Right lobe of liver (tissue), 6 donors: ENCODE measurements at regions of chrX and their contacts with region 1.

Region 1: DNA sequence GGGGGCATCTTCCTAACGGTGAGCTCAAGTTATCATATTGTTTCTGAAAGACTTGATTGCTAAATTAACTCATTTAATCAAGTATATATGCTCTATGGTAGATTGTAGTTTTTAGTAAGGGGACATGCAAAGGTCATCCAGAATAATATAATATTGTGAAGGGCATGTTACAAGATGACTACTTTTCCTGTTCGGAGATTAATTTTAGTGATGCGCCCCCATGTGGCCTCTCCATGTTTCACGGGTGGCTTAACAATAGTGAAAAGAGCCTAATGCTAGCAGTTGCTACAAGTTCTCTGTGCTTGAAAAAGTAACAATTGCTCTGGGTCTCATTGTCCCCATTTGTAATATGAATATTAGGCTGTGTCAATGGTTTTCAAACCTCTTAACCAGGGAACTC is 12.2 kb downstream of the SMPX start:
- DNase-seq: peak in 2 of 3 donors; percentile 28 to 42
- ATAC-seq: peak; percentile 27 to 48 (median 42)
- H3K4me3 ChIP-seq: no peak overlapping the region
- H3K27ac ChIP-seq: no peak overlapping the region
- H3K4me1 ChIP-seq: peaks cover 0 to 5% (median 2%) of the 10 kb centered on the region in 4 donors
- H3K27me3 ChIP-seq: no peaks in the 10 kb centered on the region
- CTCF ChIP-seq: peak; percentile 52 to 73 (median 68)
- POLR2A ChIP-seq: no peak

Region 2: GRCh38 chrX:20527558-20528011 is 1218.2 kb before region 1 on chrX:
- intact Hi-C with region 1: loop called in 1 of 2 experiments (anchors 10 kb)
- DNase-seq: peak in 1 of 3 donors; percentile 18
- ATAC-seq: peak; percentile 77 to 88 (median 85)
- H3K4me3 ChIP-seq: no peak overlapping the region
- H3K27ac ChIP-seq: no peak overlapping the region
- H3K4me1 ChIP-seq: no peaks in the 10 kb centered on the region
- H3K27me3 ChIP-seq: peaks cover 0 to 4% of the 10 kb centered on the region in 2 donors
- CTCF ChIP-seq: peak; percentile 63 to 81 (median 68)
- POLR2A ChIP-seq: no peak

Region 3: DNA sequence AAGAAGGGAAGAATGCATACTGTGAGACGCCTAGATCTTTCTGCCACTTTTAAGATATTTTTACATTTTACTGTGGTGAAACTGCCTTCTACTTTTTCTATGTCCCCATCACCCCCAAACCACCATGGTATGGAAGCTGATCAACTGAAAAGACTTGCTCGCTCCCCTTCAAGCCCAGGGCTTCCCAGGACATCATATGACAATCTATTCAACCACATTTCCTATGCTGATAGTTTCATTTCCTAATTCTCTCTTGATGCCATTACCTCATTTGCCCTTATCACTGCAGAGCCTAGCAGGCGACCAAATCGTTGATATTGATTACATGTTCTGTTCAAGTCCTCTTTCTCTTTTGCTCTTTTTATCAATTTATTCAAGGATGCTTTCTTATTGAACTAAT is 47.5 kb before region 1 on chrX:
- intact Hi-C with region 1: no loop called
- DNase-seq: no peak
- ATAC-seq: peak in 1 of 4 donors; percentile 27
- H3K4me3 ChIP-seq: no peak overlapping the region
- H3K27ac ChIP-seq: no peak overlapping the region
- H3K4me1 ChIP-seq: peaks cover 0 to 12% (median 0%) of the 10 kb centered on the region in 4 donors
- H3K27me3 ChIP-seq: no peaks in the 10 kb centered on the region
- CTCF ChIP-seq: no peak
- POLR2A ChIP-seq: no peak